Posterior vena cava (tissue), 2 donors: ENCODE measurements at regions of chr2 and their contacts with region 1.

Region 1: DNA sequence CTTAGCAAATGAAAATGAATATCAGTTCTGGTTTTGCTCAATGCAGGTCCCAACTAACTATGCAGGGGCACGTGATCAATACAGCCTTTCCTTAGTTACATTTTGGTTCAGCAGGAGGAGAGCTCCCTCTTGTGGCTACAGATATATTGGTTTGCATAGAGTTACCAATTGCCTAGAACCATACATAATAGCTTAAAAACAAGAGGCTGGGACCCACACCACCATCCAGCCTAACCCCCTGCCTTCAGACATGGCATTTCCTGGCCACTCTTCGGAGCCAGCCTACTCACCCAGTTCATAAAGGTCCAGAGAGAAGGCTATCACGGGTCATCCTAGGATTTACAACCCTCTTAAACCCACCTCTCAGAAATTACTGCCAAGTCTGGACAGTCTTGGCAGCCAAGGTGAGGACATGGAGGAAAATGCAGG is 10.5 kb downstream of the CCDC93 start:
- DNase-seq: no peak

Region 2: GRCh38 chr2:117835990-117836760 is 167.2 kb before region 1 on chr2:
- intact Hi-C with region 1: loop called in 1 of 2 experiments (anchors 5 kb)
- DNase-seq: peak; percentile 96

Region 3: GRCh38 chr2:119170504-119170903 is 1167.1 kb after region 1 on chr2:
- intact Hi-C with region 1: no loop called
- DNase-seq: peak; percentile 72